ENCODE measurements at regions of chr7 and their contacts with region 1.

Region 1: DNA sequence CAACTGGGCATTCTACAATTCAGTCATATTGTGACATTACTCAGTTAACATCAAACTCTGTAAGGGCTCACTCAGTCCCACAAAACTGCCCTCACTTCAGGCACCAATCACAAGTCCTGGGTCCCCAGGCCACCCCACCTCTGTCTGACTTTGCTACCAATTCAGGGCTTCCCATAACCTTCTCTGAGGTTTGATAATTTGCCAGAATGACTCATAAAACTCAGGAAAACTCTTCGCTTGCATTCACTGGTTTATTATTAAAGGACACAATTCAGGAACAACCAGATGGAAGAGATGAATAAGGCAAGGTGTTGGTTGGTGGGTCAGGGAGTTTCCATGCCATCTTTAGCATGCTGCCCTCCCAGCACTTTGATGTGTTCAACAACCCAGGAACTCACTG is 41.3 kb downstream of the AVL9 start:
- DNase-seq: peak; percentile 86
- ATAC-seq: peak; percentile 81
- H3K4me3 ChIP-seq: no peak overlapping the region
- H3K27ac ChIP-seq: no peak overlapping the region
- H3K4me1 ChIP-seq: peaks cover 16% of the 10 kb centered on the region
- H3K27me3 ChIP-seq: no peaks in the 10 kb centered on the region
- CTCF ChIP-seq: no peak

Region 2: GRCh38 chr7:32500922-32501341 is 35.7 kb before region 1 on chr7:
- CTCF ChIA-PET with region 1: no interaction called
- POLR2A ChIA-PET with region 1: no interaction called
- intact Hi-C with region 1: loop called (anchors 2 kb)
- DNase-seq: peak; percentile 81
- ATAC-seq: peak; percentile 80
- H3K4me3 ChIP-seq: peak overlapping the region; percentile 51
- H3K27ac ChIP-seq: peak overlapping the region; percentile 82
- H3K4me1 ChIP-seq: peaks cover 25% of the 10 kb centered on the region
- H3K27me3 ChIP-seq: no peaks in the 10 kb centered on the region
- CTCF ChIP-seq: no peak